T-cell (primary cell): ENCODE measurements at regions of chr10 and their contacts with region 1.

Region 1: DNA sequence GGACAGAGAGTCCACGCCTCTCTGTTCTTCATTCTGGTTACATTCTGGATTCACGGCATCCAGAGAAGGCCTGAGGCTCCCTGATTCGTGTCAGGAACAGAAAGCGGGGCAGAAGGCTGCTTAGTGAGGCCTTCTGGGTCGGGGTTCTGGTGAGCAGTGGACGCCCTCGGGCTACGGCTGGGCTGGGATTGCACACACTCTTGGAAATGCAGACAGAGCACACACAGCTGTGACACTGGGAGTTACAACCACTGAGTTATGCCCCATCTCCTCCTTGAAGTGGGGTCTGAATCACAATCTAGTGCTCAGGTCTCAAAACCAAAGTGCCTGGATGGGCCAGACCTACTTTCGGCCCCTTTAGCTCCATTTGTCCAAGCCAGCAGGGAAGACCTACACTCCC is 156.9 kb upstream of the GDF10 start:
- DNase-seq: no peak
- ATAC-seq: no peak
- H3K4me3 ChIP-seq: no peak overlapping the region
- H3K4me3 Mint-ChIP-seq: no peak overlapping the region
- H3K27ac ChIP-seq: no peak overlapping the region
- H3K27ac Mint-ChIP-seq: no peak overlapping the region
- H3K4me1 ChIP-seq: no peaks in the 10 kb centered on the region
- H3K4me1 Mint-ChIP-seq: peaks cover 0 to 11% (median 4%) of the 10 kb centered on the region in 3 donors
- H3K27me3 ChIP-seq: peaks cover 0 to 6% of the 10 kb centered on the region in 2 experiments
- H3K27me3 Mint-ChIP-seq: no peaks in the 10 kb centered on the region

Region 2: GRCh38 chr10:47107007-47107747 is 35.9 kb before region 1 on chr10:
- CTCF ChIA-PET with region 1: no interaction called
- POLR2A ChIA-PET with region 1: interaction called in 1 of 2 experiments, 11 read pairs
- DNase-seq: no peak
- ATAC-seq: no peak
- H3K4me3 ChIP-seq: no peak overlapping the region
- H3K4me3 Mint-ChIP-seq: no peak overlapping the region
- H3K27ac ChIP-seq: no peak overlapping the region
- H3K27ac Mint-ChIP-seq: no peak overlapping the region
- H3K4me1 ChIP-seq: no peaks in the 10 kb centered on the region
- H3K4me1 Mint-ChIP-seq: peaks cover 7 to 12% (median 8%) of the 10 kb centered on the region in 3 donors
- H3K27me3 ChIP-seq: peaks cover 0 to 2% of the 10 kb centered on the region in 2 experiments
- H3K27me3 Mint-ChIP-seq: no peaks in the 10 kb centered on the region

Region 3: GRCh38 chr10:47165711-47166524 is 22.8 kb after region 1 on chr10:
- CTCF ChIA-PET with region 1: no interaction called
- POLR2A ChIA-PET with region 1: no interaction called
- DNase-seq: peak; percentile 22 to 74 (median 50)
- ATAC-seq: peak; percentile 84 to 90 (median 86)
- H3K4me3 ChIP-seq: peak overlapping the region; percentile 50 to 65
- H3K4me3 Mint-ChIP-seq: peak overlapping the region; percentile 82 to 87 (median 84)
- H3K27ac ChIP-seq: peak overlapping the region; percentile 89
- H3K27ac Mint-ChIP-seq: peak overlapping the region; percentile 98 to 99
- H3K4me1 ChIP-seq: peaks cover 10 to 25% of the 10 kb centered on the region in 2 experiments
- H3K4me1 Mint-ChIP-seq: peaks cover 28 to 35% (median 29%) of the 10 kb centered on the region in 3 donors
- H3K27me3 ChIP-seq: peaks cover 0 to 4% of the 10 kb centered on the region in 2 experiments
- H3K27me3 Mint-ChIP-seq: no peaks in the 10 kb centered on the region